H1 (cell line): ENCODE measurements at regions of chr13 and their contacts with region 1.

Region 1: DNA sequence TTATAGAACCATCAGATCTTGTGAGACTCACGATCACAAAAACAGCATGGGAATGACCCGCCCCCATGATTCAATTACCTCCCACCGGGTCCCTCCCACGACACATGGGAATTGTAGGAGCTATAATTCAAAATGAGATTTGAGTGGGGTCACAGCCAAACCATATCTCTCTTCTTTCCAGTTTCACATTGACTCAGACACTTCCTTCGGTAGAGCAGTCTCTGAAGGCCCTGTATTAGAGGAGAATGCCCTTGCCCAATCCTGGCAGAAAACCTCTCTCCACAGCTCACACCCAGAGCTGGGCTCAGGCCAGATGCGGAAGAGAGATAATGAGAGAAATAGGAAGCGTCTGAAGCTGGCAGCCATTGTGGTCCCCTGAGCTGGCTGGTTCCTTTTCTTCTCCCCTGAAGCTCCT is 72.4 kb upstream of the CLDN10 start:
- DNase-seq: no peak
- H3K4me3 ChIP-seq: no peak overlapping the region
- H3K27ac ChIP-seq: no peak overlapping the region
- H3K4me1 ChIP-seq: no peaks in the 10 kb centered on the region; a peak in 1 of 7 replicates
- H3K27me3 ChIP-seq: peaks cover 0 to 2% (median 0%) of the 10 kb centered on the region in 4 experiments; a peak in 3 of 7 replicates
- CTCF ChIP-seq: no peak
- EP300 ChIP-seq: no peak
- POLR2A ChIP-seq: no peak
- RAD21 ChIP-seq: no peak

Region 2: GRCh38 chr13:95267662-95268342 is 212.3 kb before region 1 on chr13:
- CTCF ChIA-PET with region 1: no interaction called
- POLR2A ChIA-PET with region 1: no interaction called
- DNase-seq: no peak
- H3K4me3 ChIP-seq: no peak overlapping the region
- H3K27ac ChIP-seq: no peak overlapping the region
- H3K4me1 ChIP-seq: no peaks in the 10 kb centered on the region
- H3K27me3 ChIP-seq: no peaks in the 10 kb centered on the region
- CTCF ChIP-seq: no peak
- EP300 ChIP-seq: no peak
- POLR2A ChIP-seq: no peak
- RAD21 ChIP-seq: no peak

Region 3: DNA sequence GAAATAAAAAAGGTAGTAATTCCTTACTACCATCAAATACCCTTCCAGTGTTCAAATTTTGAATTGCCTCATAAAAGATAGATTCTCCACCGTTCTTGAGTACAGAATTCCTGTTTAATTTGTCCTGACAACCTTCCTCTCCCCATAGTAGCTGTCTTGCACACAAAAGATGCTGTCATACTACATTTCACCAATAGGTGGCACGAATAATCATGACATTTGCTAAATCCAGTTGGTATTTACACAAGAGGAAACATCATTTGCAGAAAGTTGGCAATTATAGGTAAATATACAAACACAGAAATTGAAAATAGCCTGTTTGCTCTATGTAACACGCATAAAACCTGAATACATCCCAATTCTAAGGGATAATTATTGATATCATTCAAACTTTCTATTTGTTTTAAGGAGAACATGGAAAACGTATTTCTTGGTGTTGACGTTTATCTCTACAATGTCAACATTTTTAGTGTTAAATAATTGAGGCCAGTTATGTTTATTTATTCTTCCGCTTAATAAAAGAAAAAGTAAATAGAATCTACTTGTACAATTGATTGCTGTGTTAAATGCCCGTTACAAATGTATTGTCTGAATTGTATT is 14.0 kb after region 1 on chr13:
- CTCF ChIA-PET with region 1: interaction called, 62 read pairs
- POLR2A ChIA-PET with region 1: no interaction called
- DNase-seq: no peak
- H3K4me3 ChIP-seq: no peak overlapping the region
- H3K27ac ChIP-seq: no peak overlapping the region
- H3K4me1 ChIP-seq: no peaks in the 10 kb centered on the region
- H3K27me3 ChIP-seq: no peaks in the 10 kb centered on the region
- CTCF ChIP-seq: peak in 2 of 3 experiments; percentile 44 to 68; a peak in 3 of 4 replicates
- EP300 ChIP-seq: no peak
- POLR2A ChIP-seq: no peak
- RAD21 ChIP-seq: peak; percentile 57 to 62

Region 4: GRCh38 chr13:95509521-95510310 is 29.6 kb after region 1 on chr13:
- CTCF ChIA-PET with region 1: no interaction called
- POLR2A ChIA-PET with region 1: no interaction called
- DNase-seq: no peak
- H3K4me3 ChIP-seq: no peak overlapping the region
- H3K27ac ChIP-seq: no peak overlapping the region
- H3K4me1 ChIP-seq: peaks cover 0 to 5% (median 1%) of the 10 kb centered on the region in 4 experiments; a peak in 4 of 7 replicates
- H3K27me3 ChIP-seq: no peaks in the 10 kb centered on the region
- CTCF ChIP-seq: no peak
- EP300 ChIP-seq: no peak
- POLR2A ChIP-seq: no peak
- RAD21 ChIP-seq: no peak